Gastrocnemius medialis (tissue), 4 donors: ENCODE measurements at regions of chr2 and their contacts with region 1.

Region 1: DNA sequence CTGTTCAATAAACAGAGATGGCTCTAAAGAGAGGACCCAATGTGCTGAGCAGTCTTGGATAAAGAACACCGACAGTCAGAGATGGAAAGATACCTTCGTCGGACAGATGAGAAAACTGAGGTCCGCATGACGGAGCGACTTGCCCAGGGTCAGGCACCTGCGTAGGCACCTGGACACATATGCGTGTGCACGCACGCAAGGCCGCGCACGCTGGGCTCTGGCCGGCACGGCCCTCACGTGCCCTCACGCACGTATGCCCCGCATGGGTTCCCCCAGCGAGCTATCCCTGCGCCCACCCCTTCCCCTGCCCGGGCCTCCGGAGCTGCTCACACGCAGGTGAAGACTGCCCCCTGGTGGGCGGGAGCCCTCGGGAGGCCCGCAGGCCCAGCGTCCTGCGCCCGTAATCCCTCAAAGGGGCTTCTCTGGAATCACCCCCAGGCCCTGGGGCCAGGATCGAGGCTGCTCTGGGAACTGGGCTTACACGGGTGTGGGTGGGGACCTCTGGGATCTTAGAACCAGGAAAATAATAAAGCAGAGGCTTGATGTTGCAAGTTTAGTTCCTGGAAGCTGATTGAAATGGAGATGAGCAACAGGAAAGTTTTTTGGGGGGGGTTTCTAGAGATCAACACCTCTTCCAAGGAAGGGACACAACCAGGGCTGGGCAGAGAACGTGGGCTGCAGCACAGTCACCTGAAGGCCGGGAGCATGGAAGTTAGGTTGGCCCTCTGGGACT is 246.3 kb downstream of the TNS1 start:
- DNase-seq: peak in 1 of 2 donors; percentile 39
- ATAC-seq: peak; percentile 40 to 60
- H3K4me3 ChIP-seq: peak overlapping the region in 3 of 4 donors; percentile 19 to 29 (median 26)
- H3K27ac ChIP-seq: no peak overlapping the region
- H3K4me1 ChIP-seq: peaks cover 4 to 7% of the 10 kb centered on the region in 2 donors
- H3K27me3 ChIP-seq: no peaks in the 10 kb centered on the region
- CTCF ChIP-seq: peak; percentile 57 to 92 (median 87)
- POLR2A ChIP-seq: no peak

Region 2: DNA sequence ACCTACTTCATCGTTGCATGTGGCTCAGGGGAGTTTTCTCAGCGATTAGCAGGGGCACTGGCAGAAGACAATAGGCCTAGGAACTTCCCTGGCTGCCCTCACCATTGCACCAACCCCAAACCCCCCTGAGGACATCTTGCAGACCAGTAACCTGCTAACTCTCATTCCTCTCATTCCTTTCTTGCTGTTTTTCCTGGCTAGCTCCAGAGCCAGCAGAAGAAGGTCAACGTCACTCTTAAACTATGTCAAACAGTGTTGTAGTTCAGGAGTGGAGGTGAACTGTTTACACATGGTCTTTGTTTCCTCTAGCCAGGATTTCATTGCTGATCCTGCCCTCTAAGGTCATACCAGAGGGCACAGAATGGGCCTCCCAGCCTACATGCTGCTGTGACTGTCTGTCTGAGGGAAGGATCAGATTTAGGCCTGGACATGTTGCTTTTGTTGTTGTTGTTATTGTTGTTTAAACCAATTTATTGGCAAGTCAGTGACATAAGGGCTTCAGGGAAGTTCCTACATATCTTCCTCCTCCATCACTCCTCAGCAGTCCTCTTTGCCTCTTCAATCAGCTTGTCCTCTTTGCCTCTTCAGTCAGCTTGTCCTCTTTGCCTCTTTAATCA is 424.9 kb before region 1 on chr2:
- in situ Hi-C with region 1: no loop called
- intact Hi-C with region 1: loop called (anchors 10 kb)
- DNase-seq: no peak
- ATAC-seq: peak in 1 of 2 donors; percentile 41
- H3K4me3 ChIP-seq: no peak overlapping the region
- H3K27ac ChIP-seq: peak overlapping the region in 1 of 4 donors; percentile 43
- H3K4me1 ChIP-seq: peaks cover 3 to 13% of the 10 kb centered on the region in 2 donors
- H3K27me3 ChIP-seq: no peaks in the 10 kb centered on the region
- CTCF ChIP-seq: no peak
- POLR2A ChIP-seq: no peak

Region 3: GRCh38 chr2:217650716-217651360 is 105.7 kb before region 1 on chr2:
- in situ Hi-C with region 1: no loop called
- intact Hi-C with region 1: loop called (anchors 2 kb)
- DNase-seq: peak in 1 of 2 donors; percentile 21
- ATAC-seq: peak; percentile 55 to 77
- H3K4me3 ChIP-seq: no peak overlapping the region
- H3K27ac ChIP-seq: no peak overlapping the region
- H3K4me1 ChIP-seq: peaks cover 5 to 6% of the 10 kb centered on the region in 2 donors
- H3K27me3 ChIP-seq: no peaks in the 10 kb centered on the region
- CTCF ChIP-seq: peak; percentile 8 to 74 (median 53)
- POLR2A ChIP-seq: no peak